Left ventricle myocardium inferior (tissue), 1 donor: ENCODE measurements at regions of chr1 and their contacts with region 1.

Region 1: DNA sequence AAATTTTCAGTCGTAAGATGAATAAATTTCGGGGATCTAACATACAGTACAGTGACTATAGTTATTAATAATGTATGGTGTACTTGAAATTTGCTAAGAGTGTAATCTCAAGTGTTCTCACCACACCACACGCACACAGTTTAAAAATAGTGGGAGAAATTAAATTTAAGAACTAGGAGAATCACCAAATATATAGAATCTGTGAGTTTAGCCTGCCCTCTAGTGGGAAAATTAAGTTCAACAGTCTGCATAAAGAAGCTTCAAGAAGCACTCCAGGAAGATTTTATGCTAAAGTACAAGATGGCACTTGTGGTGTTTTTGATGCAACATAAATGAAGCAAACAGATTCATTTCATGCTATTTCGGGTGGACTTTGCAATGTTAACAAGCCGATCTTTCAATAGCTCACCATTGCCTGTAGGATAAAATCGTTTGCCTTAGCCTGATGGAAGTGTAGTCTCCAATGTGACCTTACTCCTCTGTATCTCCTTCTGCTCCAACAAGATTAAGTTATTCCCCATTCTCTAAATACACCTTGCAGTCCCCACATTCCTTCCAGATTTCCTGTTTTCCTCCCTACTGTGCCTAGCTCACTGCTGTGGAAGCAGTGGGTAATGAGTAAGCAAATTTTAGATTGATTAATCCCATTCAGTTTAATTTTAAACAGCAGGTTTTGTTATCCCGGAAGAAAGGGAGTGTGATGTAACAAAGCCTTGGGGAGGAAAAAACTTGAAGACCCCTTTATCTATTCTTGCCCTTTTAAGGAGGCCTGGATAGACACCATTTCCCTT is 8.7 kb upstream of the PIK3C2B start:
- DNase-seq: no peak
- H3K4me3 ChIP-seq: no peak overlapping the region
- H3K27ac ChIP-seq: no peak overlapping the region
- H3K4me1 ChIP-seq: peaks cover 31% of the 10 kb centered on the region
- H3K27me3 ChIP-seq: no peaks in the 10 kb centered on the region
- CTCF ChIP-seq: peak; percentile 87

Region 2: GRCh38 chr1:204446370-204447111 is 56.8 kb before region 1 on chr1:
- intact Hi-C with region 1: loop called (anchors 5 kb)
- DNase-seq: peak; percentile 78
- H3K4me3 ChIP-seq: peak overlapping the region; percentile 8
- H3K27ac ChIP-seq: peak overlapping the region; percentile 69
- H3K4me1 ChIP-seq: peaks cover 90% of the 10 kb centered on the region
- H3K27me3 ChIP-seq: no peaks in the 10 kb centered on the region
- CTCF ChIP-seq: peak; percentile 80